PC-9 (cell line): ENCODE measurements at regions of chr3 and their contacts with region 1.

Region 1: DNA sequence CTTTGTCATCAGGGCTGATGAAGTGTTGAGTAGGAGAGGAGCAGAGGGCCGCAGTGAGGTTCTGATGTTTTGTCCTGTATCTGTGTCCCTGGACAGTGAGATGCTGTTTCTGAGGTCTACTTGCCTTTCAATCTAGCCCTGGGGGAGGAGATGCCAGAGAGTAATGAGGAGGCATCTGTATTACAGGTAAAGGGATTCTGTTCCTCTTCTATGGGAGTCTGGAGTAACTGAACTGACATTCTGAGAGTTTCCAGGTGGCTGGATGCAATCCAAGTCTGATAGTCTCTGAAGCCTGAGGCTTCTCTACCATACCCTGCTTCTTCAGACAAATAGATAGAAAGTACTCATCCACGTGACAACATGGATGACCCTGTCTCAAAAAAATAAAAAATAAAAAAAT is 60.9 kb downstream of the IL12A start:
- DNase-seq: no peak
- H3K4me3 ChIP-seq: no peak overlapping the region
- H3K27ac ChIP-seq: no peak overlapping the region
- H3K4me1 ChIP-seq: no peaks in the 10 kb centered on the region
- H3K27me3 ChIP-seq: no peaks in the 10 kb centered on the region
- CTCF ChIP-seq: no peak

Region 2: GRCh38 chr3:161247049-161247448 is 1197.5 kb after region 1 on chr3:
- CTCF ChIA-PET with region 1: no interaction called
- POLR2A ChIA-PET with region 1: interaction called, 14 read pairs
- intact Hi-C with region 1: no loop called
- DNase-seq: no peak
- H3K4me3 ChIP-seq: no peak overlapping the region
- H3K27ac ChIP-seq: no peak overlapping the region
- H3K4me1 ChIP-seq: no peaks in the 10 kb centered on the region
- H3K27me3 ChIP-seq: no peaks in the 10 kb centered on the region
- CTCF ChIP-seq: no peak